ENCODE measurements at regions of chr1 and their contacts with region 1.

Region 1: DNA sequence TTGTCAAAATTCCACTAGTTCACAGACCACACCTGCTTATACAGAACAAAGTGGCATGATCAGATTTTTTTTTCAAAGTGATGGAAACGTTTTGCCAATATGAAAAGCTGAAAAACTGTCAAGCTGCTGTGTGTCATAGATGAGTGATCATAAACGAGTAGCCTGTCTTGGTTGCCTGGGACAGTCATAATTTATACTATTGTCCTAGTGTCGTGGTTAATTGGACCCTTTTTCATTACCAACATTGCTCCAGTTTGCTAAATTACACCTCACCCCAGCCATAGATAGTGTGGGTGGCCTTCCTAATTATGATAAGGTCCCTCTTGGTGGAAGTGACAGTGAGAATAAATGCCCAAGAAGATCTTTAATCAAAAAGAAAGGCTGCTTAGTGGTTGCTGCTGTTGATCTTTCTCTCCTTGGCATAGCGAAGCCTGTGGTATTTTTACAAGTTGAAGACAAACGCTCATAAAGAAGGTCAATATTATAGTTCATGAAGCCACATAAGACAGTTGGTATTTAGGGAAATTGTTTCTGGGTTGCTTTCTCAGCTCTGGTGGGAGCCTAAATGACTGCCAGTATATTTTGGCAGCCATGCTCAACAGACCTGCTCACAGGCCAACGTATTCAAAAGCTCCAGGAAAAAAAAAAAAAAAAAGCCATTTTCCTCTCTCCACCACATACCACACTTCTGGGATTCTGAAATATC is 478.1 kb downstream of the PLA2G4A start:
- DNase-seq: no peak
- H3K4me3 Mint-ChIP-seq: no peak overlapping the region
- H3K27ac Mint-ChIP-seq: no peak overlapping the region
- H3K4me1 Mint-ChIP-seq: no peaks in the 10 kb centered on the region
- H3K27me3 Mint-ChIP-seq: no peaks in the 10 kb centered on the region

Region 2: GRCh38 chr1:187244623-187245022 is 62.2 kb before region 1 on chr1:
- intact Hi-C with region 1: loop called (anchors 10 kb)
- DNase-seq: no peak
- H3K4me3 Mint-ChIP-seq: no peak overlapping the region
- H3K27ac Mint-ChIP-seq: no peak overlapping the region
- H3K4me1 Mint-ChIP-seq: no peaks in the 10 kb centered on the region
- H3K27me3 Mint-ChIP-seq: no peaks in the 10 kb centered on the region

Region 3: GRCh38 chr1:187359581-187359980 is 52.7 kb after region 1 on chr1:
- intact Hi-C with region 1: no loop called
- DNase-seq: no peak
- H3K4me3 Mint-ChIP-seq: no peak overlapping the region
- H3K27ac Mint-ChIP-seq: no peak overlapping the region
- H3K4me1 Mint-ChIP-seq: no peaks in the 10 kb centered on the region
- H3K27me3 Mint-ChIP-seq: no peaks in the 10 kb centered on the region